ENCODE measurements at regions of chr16 and their contacts with region 1.

Region 1: DNA sequence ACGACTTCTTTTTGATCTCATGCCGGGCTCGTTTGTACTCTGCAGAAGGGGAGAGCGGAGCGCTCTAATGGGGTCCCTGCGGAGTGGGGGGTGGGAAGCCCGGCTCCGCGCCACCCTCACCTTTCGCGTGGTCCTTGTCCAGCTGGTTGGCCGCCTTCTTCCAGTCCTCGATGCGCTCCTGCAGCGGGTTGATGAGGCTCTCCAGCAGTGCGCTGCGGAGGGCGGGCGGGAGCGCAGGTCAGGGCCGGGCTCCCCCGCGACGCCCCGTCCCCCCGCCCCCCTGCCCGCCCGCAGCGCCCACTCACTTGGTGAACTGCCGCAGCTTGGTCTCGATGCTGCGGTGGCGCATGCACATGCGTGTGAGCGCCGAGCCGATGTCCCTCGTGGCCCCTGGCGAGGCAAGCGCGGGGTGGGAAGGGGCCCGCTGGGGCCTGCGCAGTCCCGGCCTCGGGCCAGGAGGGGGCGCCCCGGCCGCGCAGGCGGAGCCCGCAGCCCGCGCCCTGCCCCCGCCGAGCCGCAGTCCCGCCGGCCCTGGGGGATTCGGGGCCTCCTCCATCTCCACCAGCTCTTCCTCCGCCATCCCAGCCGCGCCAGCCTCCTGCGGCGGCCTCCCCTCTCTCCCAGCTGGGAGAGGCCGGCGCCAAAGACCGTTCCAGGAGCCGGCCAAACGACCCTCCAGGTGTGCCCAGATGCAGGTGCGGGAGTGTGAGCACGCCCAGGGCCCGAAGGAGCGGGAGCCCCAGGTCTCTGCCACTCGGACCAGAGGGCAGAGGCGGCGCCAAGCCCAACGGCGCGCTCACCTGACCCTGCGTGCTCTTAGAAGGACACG is 6.0 kb downstream of the MTSS2 start:
- DNase-seq: no peak
- ATAC-seq: peak; percentile 38
- H3K4me3 ChIP-seq: no peak overlapping the region
- H3K27ac ChIP-seq: no peak overlapping the region
- H3K4me1 ChIP-seq: peaks cover 32% of the 10 kb centered on the region
- H3K27me3 ChIP-seq: no peaks in the 10 kb centered on the region
- CTCF ChIP-seq: peak; percentile 26

Region 2: DNA sequence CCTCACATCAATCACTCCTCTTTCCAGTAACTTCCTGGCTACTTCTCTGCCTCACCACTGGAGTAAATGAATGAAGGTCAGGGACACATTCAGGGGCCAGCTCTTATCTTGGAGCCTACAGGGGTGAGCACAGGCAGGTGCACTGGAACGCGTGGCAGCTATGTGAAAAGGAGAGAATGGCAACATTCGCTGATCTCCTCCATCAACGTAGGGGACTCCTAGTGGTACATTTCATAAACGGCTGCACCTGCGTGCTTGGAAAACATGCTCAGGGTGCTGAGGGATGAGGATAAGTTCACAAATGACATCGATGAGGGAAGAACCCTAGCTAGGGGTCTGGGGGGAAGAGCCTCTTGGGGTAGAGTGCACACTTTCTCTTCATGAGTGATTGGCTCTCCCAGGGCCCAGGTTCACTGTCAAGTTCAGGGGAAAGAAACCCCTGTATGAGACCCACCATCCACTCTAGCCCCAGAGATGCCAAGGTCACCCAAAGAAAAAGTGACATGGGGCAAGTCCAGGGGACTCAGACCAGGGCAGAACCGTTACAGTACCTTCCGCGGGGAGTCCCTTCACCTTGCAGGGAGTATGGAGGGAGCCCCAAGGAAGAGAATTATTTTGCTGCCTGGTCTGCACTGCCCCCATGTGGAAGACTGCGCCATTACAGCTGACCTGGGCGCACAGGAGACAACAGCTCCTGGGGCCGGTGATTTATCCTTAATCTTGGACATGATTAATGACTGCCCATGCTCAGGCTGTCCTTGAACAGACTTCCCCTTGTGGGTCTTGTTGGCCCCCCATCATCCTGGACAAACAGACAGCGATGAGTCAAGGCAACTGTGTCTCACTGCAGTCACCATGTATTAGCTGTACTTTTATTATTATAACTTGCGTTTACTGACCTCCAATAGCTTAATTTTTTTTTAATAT is 91.0 kb after region 1 on chr16:
- intact Hi-C with region 1: loop called (anchors 10 kb)
- DNase-seq: peak; percentile 75
- ATAC-seq: peak; percentile 91
- H3K4me3 ChIP-seq: no peak overlapping the region
- H3K27ac ChIP-seq: no peak overlapping the region
- H3K4me1 ChIP-seq: no peaks in the 10 kb centered on the region
- H3K27me3 ChIP-seq: no peaks in the 10 kb centered on the region
- CTCF ChIP-seq: peak; percentile 96